Lower leg skin (tissue), 4 donors: ENCODE measurements at regions of chr4 and their contacts with region 1.

Region 1: DNA sequence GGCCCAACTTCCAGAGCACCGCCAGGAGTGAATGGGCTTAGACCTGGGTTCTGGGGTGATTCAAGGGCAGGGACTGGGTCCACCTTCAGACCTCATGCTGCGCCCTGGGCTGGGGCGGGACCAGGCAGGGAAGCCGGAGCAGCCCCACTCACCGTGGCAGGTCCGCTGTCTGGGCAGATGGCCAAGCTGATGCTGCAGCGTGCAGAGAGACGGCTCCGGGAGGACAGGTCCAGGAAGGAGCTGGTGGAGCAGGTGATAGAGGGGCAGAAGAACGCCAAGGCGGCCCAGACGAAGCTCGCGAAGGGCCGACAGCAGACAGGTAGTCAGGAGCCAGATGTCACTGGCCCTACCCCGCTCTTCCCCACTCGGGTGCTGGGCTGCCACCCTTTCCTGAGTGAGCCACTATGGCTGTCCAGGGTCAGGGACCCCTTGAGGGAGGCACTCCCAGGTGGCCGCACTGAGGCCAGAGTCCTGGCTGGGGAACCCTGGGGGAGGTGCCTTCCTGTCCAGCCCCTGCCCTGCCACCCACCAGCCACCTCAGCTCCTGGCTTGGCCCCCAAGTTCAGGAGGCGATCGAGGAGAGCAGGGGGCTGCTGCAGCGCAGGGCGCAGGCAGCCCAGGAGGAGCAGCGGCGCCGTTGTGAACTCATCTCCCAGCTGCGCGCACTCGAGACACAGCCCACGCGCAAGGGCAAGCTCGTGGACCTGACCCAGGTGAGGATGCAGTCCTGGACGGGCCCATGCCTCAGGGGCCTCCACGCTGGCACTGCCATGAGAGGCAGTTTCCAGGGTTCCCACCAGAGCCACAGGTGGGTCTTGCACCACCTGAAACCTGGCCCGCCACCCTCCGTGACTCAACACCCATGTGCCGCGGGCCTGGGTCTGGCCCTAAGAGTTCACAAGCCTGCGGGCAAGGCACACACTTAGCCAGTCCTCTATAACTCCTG is 10.1 kb upstream of the RNF4 start:
- DNase-seq: no peak
- H3K4me3 ChIP-seq: no peak overlapping the region
- CTCF ChIP-seq: no peak
- POLR2A ChIP-seq: no peak

Region 2: GRCh38 chr4:2217726-2218125 is 241.1 kb before region 1 on chr4:
- intact Hi-C with region 1: loop called (anchors 10 kb)
- DNase-seq: no peak
- H3K4me3 ChIP-seq: no peak overlapping the region
- CTCF ChIP-seq: no peak
- POLR2A ChIP-seq: no peak